Gastrocnemius medialis (tissue), 4 donors: ENCODE measurements at regions of chr9 and their contacts with region 1.

Region 1: GRCh38 chr9:26946753-26947727 is at the start of gene PLAA:
- DNase-seq: peak; percentile 82 to 86
- ATAC-seq: peak; percentile 98 to 99
- H3K4me3 ChIP-seq: peak within 1 kb of the TSS; percentile 83 to 98 (median 95)
- H3K27ac ChIP-seq: peak within 1 kb of the TSS; percentile 86 to 99 (median 98)
- H3K4me1 ChIP-seq: peaks cover 36 to 38% of the 10 kb centered on the region in 2 donors
- H3K27me3 ChIP-seq: no peaks in the 10 kb centered on the region
- CTCF ChIP-seq: peak in 3 of 5 experiments; percentile 2 to 46 (median 41)
- POLR2A ChIP-seq: peak; percentile 65 to 79
- total RNA-seq, gene PLAA: 72.5 to 105 (median 83.8) TPM

Region 2: DNA sequence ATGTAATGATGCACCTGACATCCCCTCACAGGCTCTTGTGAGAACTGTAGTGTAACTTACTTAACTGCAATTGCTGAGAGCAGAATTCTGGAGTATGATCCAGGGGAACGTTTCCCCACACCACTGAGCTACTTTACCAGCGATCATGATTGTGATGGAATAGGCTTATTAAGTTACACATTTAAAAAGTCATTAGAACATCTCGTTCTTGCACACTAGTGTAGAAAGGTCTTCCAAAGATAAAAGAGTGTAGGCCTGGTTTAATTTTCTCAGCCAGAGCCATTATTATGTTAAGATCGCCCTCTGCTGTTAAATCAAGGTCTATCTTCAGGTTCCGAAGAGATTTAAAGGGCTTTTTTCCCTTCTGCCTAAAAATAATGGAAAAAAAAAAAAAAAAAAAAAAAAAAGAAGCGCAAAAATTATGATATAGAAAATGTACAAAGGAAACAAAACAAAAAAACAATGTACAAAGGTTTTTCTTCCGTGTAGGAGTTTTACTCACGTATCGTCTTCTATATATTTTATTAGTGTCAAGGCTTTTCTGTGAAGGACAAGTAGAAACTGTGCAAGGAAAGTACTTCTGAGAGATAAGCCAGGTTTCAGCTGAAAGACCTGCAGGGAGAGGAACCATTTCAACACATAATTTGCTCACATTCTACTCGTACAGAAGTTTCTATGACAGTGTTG is 601.2 kb after region 1 on chr9:
- in situ Hi-C with region 1: loop called in 1 of 4 experiments (anchors 25 kb)
- intact Hi-C with region 1: loop called (anchors 5 kb)
- DNase-seq: peak; percentile 51 to 69
- ATAC-seq: peak; percentile 95 to 96
- H3K4me3 ChIP-seq: no peak overlapping the region
- H3K27ac ChIP-seq: peak overlapping the region; percentile 79 to 86 (median 84)
- H3K4me1 ChIP-seq: peaks cover 14 to 24% of the 10 kb centered on the region in 2 donors
- H3K27me3 ChIP-seq: no peaks in the 10 kb centered on the region
- CTCF ChIP-seq: peak; percentile 38 to 58 (median 54)
- POLR2A ChIP-seq: peak in 1 of 2 donors; percentile 59